ENCODE measurements at regions of chr5 and their contacts with region 1.

Region 1: DNA sequence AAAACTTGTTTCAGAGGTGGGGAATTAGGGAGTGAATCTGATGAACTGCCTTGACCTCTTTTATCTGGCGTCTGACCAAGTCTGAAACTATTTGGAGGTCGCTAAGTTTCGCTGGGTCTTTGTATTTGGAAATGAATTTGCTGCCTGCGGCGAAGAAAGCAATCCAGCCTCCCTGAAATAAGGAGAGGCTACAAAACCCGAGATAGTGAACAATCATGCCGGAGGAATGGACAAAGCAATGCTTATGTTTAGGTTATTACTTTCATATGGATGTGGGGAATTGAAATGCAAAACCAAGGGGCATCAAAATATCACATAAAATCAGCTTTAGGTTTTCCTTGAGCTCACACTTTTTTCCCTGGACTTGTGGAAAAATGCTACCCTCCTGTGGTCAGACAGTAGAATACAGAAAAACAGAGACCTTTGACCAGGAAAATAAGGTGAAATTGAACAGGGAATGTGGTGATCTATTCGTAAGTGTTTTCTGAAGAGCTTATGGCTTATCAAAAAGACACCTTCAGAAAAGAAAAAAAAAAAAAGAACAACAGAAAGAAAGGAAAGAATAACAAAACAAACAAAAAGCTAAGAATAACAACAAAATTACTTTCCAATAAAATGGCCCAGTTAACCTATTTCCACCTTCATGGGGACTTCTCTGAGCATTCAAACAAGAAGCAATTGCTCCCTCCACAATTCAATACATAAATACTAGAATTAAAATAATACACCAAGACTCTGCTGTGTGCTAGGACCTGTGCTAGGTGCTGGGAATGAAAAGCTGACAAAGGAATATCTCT is 68.6 kb upstream of the DPYSL3 start:
- DNase-seq: peak; percentile 59
- H3K27ac ChIP-seq: no peak overlapping the region
- CTCF ChIP-seq: peak; percentile 83

Region 2: DNA sequence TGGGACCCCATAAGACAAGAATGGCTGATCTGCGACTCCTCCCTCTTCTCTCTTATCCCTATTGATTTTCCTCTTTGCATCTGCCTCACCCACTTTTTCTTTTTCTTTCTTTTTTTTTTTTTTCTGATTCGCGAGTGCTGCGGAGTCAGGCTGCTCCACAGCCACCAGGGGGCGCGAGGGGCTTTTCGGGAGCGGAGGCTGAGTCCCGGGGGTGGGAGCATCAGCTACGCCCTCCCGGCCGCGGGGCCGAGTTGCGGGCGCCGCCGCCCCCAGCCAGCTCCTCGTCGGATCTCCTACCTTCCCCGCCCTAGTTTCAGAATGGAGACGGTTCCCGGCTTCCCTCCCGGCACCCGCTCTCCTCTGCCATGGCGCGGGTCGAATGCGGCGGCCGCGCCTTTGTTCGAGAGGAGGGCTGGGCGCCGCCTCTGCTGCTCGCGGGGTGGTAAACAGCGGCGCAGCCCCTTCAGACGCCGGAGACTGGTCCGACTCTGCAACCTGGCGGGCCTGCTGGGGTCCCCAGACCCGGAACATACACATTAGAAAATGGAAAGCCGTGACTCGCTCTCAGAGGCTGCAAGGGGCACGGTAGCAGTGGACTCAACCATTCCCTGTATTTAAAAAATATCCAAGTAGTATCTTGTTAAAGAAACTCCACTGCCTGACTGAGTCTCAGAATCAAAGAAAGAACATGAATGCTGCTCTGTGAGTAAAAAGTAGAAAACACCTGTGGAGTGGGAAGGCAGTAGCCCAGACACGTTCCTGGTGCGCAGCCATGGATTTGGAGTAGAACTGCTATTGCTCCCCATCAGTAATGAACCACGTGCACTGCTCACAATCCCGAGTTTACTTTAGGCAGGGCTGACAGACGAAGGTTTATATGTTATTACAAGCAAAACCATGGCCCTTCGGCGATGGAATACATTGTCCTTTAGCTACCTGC is 124.3 kb before region 1 on chr5:
- CTCF ChIA-PET with region 1: interaction called, 13 read pairs
- POLR2A ChIA-PET with region 1: no interaction called
- DNase-seq: peak; percentile 81
- H3K27ac ChIP-seq: peak overlapping the region; percentile 89
- CTCF ChIP-seq: peak; percentile 98

Region 3: GRCh38 chr5:147628058-147628895 is 49.9 kb after region 1 on chr5:
- CTCF ChIA-PET with region 1: interaction called, 15 read pairs
- POLR2A ChIA-PET with region 1: no interaction called
- DNase-seq: peak; percentile 60
- H3K27ac ChIP-seq: no peak overlapping the region
- CTCF ChIP-seq: peak; percentile 84

Region 4: DNA sequence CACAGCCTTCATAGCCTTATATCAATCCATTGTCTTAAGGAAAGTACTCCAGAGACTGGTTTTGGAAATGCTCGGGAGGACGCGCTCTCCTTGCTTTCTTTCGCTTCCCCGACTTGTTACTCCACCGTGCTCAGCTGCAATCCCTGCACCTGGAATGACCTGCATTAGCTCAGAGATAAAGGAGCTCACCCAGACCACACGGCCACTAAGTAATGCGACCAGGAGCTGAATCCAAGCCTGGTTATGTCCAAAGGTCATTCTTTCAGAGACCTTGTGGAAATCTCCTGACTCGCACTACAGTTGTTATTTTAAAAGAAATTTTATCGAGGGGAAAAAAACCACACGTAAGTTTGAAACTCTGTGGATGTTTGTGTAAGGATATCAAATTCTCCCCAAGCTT is 66.8 kb after region 1 on chr5:
- CTCF ChIA-PET with region 1: no interaction called
- POLR2A ChIA-PET with region 1: no interaction called
- DNase-seq: no peak
- H3K27ac ChIP-seq: no peak overlapping the region
- CTCF ChIP-seq: no peak